B cell (primary cell): ENCODE measurements at regions of chr17 and their contacts with region 1.

Region 1: GRCh38 chr17:50161023-50161910 is 4.5 kb upstream of the SGCA start:
- DNase-seq: peak; percentile 93
- ATAC-seq: peak; percentile 92
- H3K4me3 ChIP-seq: peak overlapping the region; percentile 52 to 68 (median 66)
- H3K4me3 Mint-ChIP-seq: peak overlapping the region; percentile 80
- H3K27ac ChIP-seq: no peak overlapping the region
- H3K27ac Mint-ChIP-seq: peak overlapping the region; percentile 72
- H3K4me1 ChIP-seq: peaks cover 36 to 41% of the 10 kb centered on the region in 2 donors
- H3K4me1 Mint-ChIP-seq: peaks cover 38% of the 10 kb centered on the region
- H3K27me3 ChIP-seq: no peaks in the 10 kb centered on the region
- H3K27me3 Mint-ChIP-seq: no peaks in the 10 kb centered on the region
- CTCF ChIP-seq: peak; percentile 97

Region 2: GRCh38 chr17:50079334-50080095 is 81.8 kb before region 1 on chr17:
- CTCF ChIA-PET with region 1: no interaction called
- POLR2A ChIA-PET with region 1: no interaction called
- intact Hi-C with region 1: no loop called
- DNase-seq: peak; percentile 38
- ATAC-seq: peak; percentile 43
- H3K4me3 ChIP-seq: no peak overlapping the region
- H3K4me3 Mint-ChIP-seq: no peak overlapping the region
- H3K27ac ChIP-seq: no peak overlapping the region
- H3K27ac Mint-ChIP-seq: no peak overlapping the region
- H3K4me1 ChIP-seq: peaks cover 7 to 22% of the 10 kb centered on the region in 2 donors
- H3K4me1 Mint-ChIP-seq: peaks cover 21% of the 10 kb centered on the region
- H3K27me3 ChIP-seq: no peaks in the 10 kb centered on the region
- H3K27me3 Mint-ChIP-seq: no peaks in the 10 kb centered on the region
- CTCF ChIP-seq: peak; percentile 21

Region 3: DNA sequence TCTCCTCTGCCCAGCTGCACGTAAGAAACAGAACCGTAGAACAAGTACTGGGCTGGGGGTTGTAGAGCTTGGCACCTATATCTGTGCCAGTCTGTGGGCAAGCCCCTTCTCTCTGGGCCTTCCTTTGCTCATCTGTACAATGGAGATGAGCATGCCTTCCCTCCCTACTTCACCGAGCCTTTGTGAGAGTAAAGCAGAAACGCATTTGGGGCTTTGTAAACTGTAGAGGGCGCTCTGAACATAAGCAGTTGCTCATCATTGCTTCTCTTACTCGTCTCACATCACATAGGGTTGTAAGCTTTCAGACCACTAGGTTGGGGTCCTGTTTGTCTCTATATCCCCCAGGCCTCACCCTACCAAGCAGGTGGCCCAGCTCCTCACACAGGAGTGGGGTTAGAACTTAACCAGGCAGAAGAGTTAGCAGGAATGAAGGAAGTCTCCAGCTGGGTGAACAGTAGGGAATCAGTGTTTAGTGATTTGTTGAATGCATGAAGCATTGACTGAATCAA is 46.4 kb before region 1 on chr17:
- CTCF ChIA-PET with region 1: interaction called, 48 read pairs
- POLR2A ChIA-PET with region 1: no interaction called
- intact Hi-C with region 1: loop called (anchors 2 kb)
- DNase-seq: peak; percentile 66
- ATAC-seq: peak; percentile 20
- H3K4me3 ChIP-seq: no peak overlapping the region
- H3K4me3 Mint-ChIP-seq: peak overlapping the region; percentile 48
- H3K27ac ChIP-seq: no peak overlapping the region
- H3K27ac Mint-ChIP-seq: no peak overlapping the region
- H3K4me1 ChIP-seq: peaks cover 10 to 20% of the 10 kb centered on the region in 2 donors
- H3K4me1 Mint-ChIP-seq: peaks cover 14% of the 10 kb centered on the region
- H3K27me3 ChIP-seq: peaks cover 0 to 46% (median 16%) of the 10 kb centered on the region in 4 experiments
- H3K27me3 Mint-ChIP-seq: peaks cover 45% of the 10 kb centered on the region
- CTCF ChIP-seq: peak; percentile 72